BJ (cell line): ENCODE measurements at regions of chr1 and their contacts with region 1.

Region 1: DNA sequence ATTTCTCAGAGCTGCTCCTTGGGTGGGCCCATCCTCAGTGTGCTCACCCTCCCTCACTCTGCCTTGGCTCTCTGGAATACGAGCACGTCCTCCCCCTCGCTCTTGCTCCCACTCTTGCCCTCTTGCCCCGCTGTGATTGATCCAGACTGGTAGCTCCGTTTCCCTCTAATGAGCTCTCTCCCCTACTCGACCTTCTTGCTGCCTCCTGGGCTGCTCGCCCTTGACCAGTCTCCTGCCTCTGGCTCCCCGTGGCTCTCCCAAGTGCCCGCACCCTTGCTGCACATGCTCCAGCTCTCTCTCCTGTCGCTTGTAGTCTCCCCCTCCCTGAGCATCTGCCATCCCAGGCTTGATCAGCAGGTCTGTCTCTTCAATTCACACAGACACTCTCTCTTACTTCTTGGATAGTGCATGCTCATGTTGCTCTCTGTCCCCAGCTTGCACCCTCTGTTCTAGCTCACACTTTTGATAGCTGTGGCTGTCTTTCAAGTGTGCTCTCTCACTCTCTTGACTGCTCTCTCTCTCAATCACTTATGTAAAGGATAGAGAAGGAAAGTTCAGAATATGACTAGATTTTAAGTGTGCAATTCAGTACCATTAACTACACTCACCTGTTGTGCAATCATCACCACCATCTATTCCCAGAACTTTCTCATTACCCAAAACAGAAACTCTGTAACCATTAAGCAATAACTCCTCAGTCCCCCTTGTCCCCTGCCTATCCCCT is 51.1 kb downstream of the PHC2 start:
- DNase-seq: no peak
- H3K4me3 ChIP-seq: no peak overlapping the region
- H3K27me3 ChIP-seq: no peaks in the 10 kb centered on the region
- CTCF ChIP-seq: no peak

Region 2: GRCh38 chr1:33312413-33312749 is 67.4 kb before region 1 on chr1:
- CTCF ChIA-PET with region 1: no interaction called
- POLR2A ChIA-PET with region 1: interaction called, 21 read pairs
- DNase-seq: no peak
- H3K4me3 ChIP-seq: no peak overlapping the region
- H3K27me3 ChIP-seq: no peaks in the 10 kb centered on the region; the same call in 1 of the 2 replicates
- CTCF ChIP-seq: no peak

Region 3: GRCh38 chr1:33322870-33323585 is 56.8 kb before region 1 on chr1:
- CTCF ChIA-PET with region 1: no interaction called
- POLR2A ChIA-PET with region 1: no interaction called
- DNase-seq: no peak
- H3K4me3 ChIP-seq: no peak overlapping the region
- H3K27me3 ChIP-seq: no peaks in the 10 kb centered on the region
- CTCF ChIP-seq: no peak

Region 4: GRCh38 chr1:33334081-33334552 is 45.7 kb before region 1 on chr1:
- CTCF ChIA-PET with region 1: no interaction called
- POLR2A ChIA-PET with region 1: no interaction called
- DNase-seq: no peak
- H3K4me3 ChIP-seq: no peak overlapping the region
- H3K27me3 ChIP-seq: no peaks in the 10 kb centered on the region
- CTCF ChIP-seq: no peak

Region 5: GRCh38 chr1:33524586-33524985 is 144.8 kb after region 1 on chr1:
- CTCF ChIA-PET with region 1: no interaction called
- POLR2A ChIA-PET with region 1: no interaction called
- DNase-seq: no peak
- H3K4me3 ChIP-seq: no peak overlapping the region
- H3K27me3 ChIP-seq: no peaks in the 10 kb centered on the region
- CTCF ChIP-seq: no peak